ENCODE measurements at regions of chr12 and their contacts with region 1.

Region 1: DNA sequence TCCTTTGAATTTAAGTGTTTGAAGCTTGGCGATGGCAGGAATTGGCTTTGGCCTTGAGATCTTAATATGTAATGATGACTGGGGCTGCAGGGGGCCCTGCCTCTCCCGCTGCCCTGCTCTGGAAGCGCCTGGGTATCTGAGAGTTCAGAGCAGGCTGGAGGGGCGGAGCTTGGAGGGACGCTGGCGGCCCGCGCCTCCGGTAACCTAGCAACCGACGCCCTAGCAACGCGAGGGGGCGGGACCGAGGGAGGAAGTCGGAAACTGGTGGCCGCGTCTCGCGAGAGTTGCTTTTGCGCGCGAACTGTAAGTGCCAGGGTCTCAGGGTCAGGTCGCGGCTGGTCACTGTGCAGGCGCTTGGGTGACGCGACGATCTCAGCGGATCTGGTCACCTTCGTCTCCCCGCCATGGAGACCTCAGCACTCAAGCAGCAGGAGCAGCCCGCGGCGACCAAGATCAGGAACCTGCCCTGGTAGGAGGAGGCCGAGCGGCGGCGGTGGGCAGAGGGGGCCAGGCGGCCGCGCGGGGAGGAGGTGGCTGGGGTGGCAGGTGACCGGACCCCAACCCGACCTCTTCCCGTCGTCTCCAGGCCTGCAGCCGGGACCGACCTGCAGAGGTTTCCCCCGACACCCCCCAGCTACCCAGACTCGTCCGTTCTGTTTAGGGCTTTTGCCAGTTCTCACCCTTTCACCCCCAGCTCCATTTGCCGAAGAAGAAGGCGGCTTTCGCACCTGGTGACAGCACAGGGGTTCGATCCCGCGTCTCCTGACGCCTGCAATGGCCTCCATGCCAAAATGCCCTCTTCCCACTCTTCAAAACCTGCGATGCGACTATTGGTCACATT is at the start of gene RFC5:
- DNase-seq: peak; percentile 98
- H3K4me3 ChIP-seq: peak within 1 kb of the TSS; percentile 67 to 94 (median 81)
- H3K27ac ChIP-seq: peak within 1 kb of the TSS; percentile 32
- H3K4me1 ChIP-seq: peaks cover 9% of the 10 kb centered on the region
- H3K27me3 ChIP-seq: peaks cover 2 to 4% of the 10 kb centered on the region in 2 experiments
- CTCF ChIP-seq: no peak
- POLR2A ChIP-seq: peak; percentile 36
- total RNA-seq, gene RFC5: 23.3 and 24.8 TPM in 2 replicates

Region 2: GRCh38 chr12:118035246-118036041 is 18.8 kb after region 1 on chr12:
- CTCF ChIA-PET with region 1: interaction called, 3 read pairs
- POLR2A ChIA-PET with region 1: no interaction called
- dilution Hi-C with region 1: no loop called
- intact Hi-C with region 1: loop called (anchors 2 kb)
- DNase-seq: peak; percentile 26
- H3K4me3 ChIP-seq: no peak overlapping the region
- H3K27ac ChIP-seq: no peak overlapping the region
- H3K4me1 ChIP-seq: peaks cover 12% of the 10 kb centered on the region
- H3K27me3 ChIP-seq: no peaks in the 10 kb centered on the region
- CTCF ChIP-seq: peak; percentile 12 to 29
- POLR2A ChIP-seq: no peak

Region 3: DNA sequence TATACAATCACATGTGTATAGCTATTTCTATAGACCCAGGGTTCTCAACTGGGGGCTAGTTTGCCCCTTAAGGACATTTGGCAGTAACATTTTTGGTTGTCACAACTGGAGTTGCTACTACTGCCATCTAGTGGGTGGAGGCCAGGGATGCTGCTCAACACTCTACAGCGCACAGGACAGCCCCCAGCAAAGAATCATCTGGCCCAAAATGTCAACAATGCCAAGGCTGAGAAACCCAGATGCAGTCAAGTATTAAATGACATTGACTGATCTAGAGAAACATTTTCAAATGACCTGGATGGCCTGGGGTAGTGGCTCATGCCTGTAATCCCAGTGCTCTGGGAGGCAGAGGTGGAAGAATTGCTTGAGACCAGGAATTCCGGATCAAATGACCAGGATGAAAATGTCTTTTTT is 38.5 kb after region 1 on chr12:
- CTCF ChIA-PET with region 1: interaction called, 4 read pairs
- POLR2A ChIA-PET with region 1: no interaction called
- dilution Hi-C with region 1: no loop called
- intact Hi-C with region 1: loop called (anchors 1 kb)
- DNase-seq: peak; percentile 61
- H3K4me3 ChIP-seq: no peak overlapping the region
- H3K27ac ChIP-seq: no peak overlapping the region
- H3K4me1 ChIP-seq: peaks cover 36% of the 10 kb centered on the region
- H3K27me3 ChIP-seq: no peaks in the 10 kb centered on the region
- CTCF ChIP-seq: peak; percentile 58 to 68
- POLR2A ChIP-seq: no peak

Region 4: GRCh38 chr12:118061011-118061875 is 44.6 kb after region 1 on chr12 and contains the start of gene WSB2:
- CTCF ChIA-PET with region 1: interaction called, 3 read pairs
- POLR2A ChIA-PET with region 1: no interaction called
- dilution Hi-C with region 1: no loop called
- intact Hi-C with region 1: loop called (anchors 1 kb)
- DNase-seq: peak; percentile 64
- H3K4me3 ChIP-seq: peak within 1 kb of the TSS; percentile 61 to 99 (median 81)
- H3K27ac ChIP-seq: peak within 1 kb of the TSS; percentile 89
- H3K4me1 ChIP-seq: peaks cover 17% of the 10 kb centered on the region
- H3K27me3 ChIP-seq: no peaks in the 10 kb centered on the region
- CTCF ChIP-seq: no peak
- POLR2A ChIP-seq: no peak
- total RNA-seq, gene WSB2: 73.6 and 85.3 TPM in 2 replicates

Region 5: GRCh38 chr12:118103604-118104382 is 87.1 kb after region 1 on chr12 and contains the start of gene VSIG10:
- CTCF ChIA-PET with region 1: no interaction called
- POLR2A ChIA-PET with region 1: no interaction called
- dilution Hi-C with region 1: no loop called
- intact Hi-C with region 1: loop called (anchors 5 kb)
- DNase-seq: peak; percentile 74
- H3K4me3 ChIP-seq: peak within 1 kb of the TSS; percentile 48 to 78 (median 52)
- H3K27ac ChIP-seq: peak within 1 kb of the TSS; percentile 61
- H3K4me1 ChIP-seq: peaks cover 11% of the 10 kb centered on the region
- H3K27me3 ChIP-seq: no peaks in the 10 kb centered on the region
- CTCF ChIP-seq: no peak
- POLR2A ChIP-seq: no peak
- total RNA-seq, gene VSIG10: 38.4 and 38.6 TPM in 2 replicates

Region 6: GRCh38 chr12:118135788-118136558 is 119.3 kb after region 1 on chr12 and contains the start of gene PEBP1:
- CTCF ChIA-PET with region 1: no interaction called
- POLR2A ChIA-PET with region 1: interaction called, 3 read pairs
- dilution Hi-C with region 1: no loop called
- intact Hi-C with region 1: loop called (anchors 1 kb)
- DNase-seq: peak; percentile 94
- H3K4me3 ChIP-seq: peak within 1 kb of the TSS; percentile 48 to 82 (median 75)
- H3K27ac ChIP-seq: peak within 1 kb of the TSS; percentile 49
- H3K4me1 ChIP-seq: peaks cover 4% of the 10 kb centered on the region
- H3K27me3 ChIP-seq: no peaks in the 10 kb centered on the region
- CTCF ChIP-seq: no peak
- POLR2A ChIP-seq: peak; percentile 91
- total RNA-seq, gene PEBP1: 146 and 185 TPM in 2 replicates